ENCODE measurements at regions of chr11 and their contacts with region 1.

Region 1: GRCh38 chr11:102341844-102342318 is 5.1 kb upstream of the BIRC2 start:
- DNase-seq: peak; percentile 48
- CTCF ChIP-seq: peak; percentile 81

Region 2: DNA sequence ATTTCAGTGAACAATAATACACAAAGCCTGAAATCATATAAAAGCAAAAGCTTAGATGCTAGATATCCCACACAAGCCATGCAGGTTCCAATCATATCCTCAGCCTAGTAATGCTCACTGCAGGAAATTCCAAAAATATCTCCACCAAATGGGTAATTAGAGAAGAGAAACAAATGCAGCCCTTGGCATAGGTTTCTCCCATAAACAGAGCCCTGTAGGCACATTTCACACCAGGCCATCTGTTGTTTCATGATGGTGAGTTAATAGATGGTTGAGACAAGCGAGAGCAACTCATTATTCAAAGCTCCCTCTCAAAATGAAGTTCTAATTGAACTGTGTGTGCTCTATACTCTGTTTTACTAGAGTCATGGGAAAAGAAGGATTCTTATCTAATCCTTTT is 603.4 kb before region 1 on chr11:
- in situ Hi-C with region 1: no loop called
- DNase-seq: no peak
- CTCF ChIP-seq: no peak

Region 3: GRCh38 chr11:102495161-102496042 is 153.5 kb after region 1 on chr11:
- in situ Hi-C with region 1: no loop called
- DNase-seq: peak; percentile 51
- CTCF ChIP-seq: peak; percentile 66

Region 4: DNA sequence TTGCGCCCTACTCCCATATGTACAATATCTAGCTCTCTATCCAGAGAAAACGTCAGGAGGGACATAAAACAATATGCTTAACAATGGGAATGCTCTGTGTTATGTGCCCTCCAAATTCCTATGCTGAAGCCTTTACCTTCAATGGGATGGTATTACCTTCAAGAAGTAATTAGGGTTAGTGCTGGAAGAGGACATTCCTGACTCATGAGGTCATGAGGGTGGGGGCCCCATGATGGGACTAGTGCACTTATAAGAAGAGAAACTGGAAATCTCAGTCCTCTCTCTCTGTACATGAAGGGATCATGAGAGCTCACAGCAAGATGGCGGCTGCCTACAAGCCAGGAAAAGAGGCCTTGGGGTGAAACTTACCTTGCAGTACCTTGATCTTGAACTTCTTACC is 263.0 kb after region 1 on chr11:
- in situ Hi-C with region 1: loop called (anchors 5 kb)
- DNase-seq: no peak
- CTCF ChIP-seq: no peak